ENCODE measurements at regions of chr14 and their contacts with region 1.

Region 1: GRCh38 chr14:66403183-66403582 is 83.0 kb upstream of the CCDC196 start:
- DNase-seq: no peak
- H3K4me3 ChIP-seq: no peak overlapping the region
- H3K27ac ChIP-seq: no peak overlapping the region
- H3K4me1 ChIP-seq: no peaks in the 10 kb centered on the region; a peak in 1 of 7 replicates
- H3K27me3 ChIP-seq: no peaks in the 10 kb centered on the region
- CTCF ChIP-seq: peak in 2 of 3 experiments; percentile 25 to 42; a peak in 2 of 4 replicates
- EP300 ChIP-seq: no peak
- POLR2A ChIP-seq: no peak
- RAD21 ChIP-seq: peak; percentile 36 to 59

Region 2: DNA sequence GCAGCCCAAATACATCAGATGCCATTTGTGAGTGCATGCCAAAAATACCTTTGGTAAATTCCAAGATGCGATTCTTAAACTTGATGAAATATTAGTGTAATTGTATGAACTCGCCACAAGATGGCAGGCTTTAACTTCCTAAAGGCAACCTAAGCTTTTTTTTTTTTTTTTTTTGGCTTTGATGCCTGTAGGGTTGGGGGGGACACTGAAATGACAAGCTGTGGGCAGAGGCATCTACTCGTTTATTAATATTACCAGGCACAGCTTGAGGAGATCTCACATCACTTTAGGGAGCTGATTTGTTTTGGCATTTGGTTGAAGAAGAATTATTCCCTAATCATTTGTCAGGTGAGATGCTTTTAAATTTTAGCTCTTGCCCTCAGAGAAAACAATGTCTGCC is 43.7 kb before region 1 on chr14:
- CTCF ChIA-PET with region 1: interaction called, 35 read pairs
- POLR2A ChIA-PET with region 1: no interaction called
- DNase-seq: no peak
- H3K4me3 ChIP-seq: no peak overlapping the region
- H3K27ac ChIP-seq: no peak overlapping the region
- H3K4me1 ChIP-seq: peaks cover 0 to 6% (median 0%) of the 10 kb centered on the region in 4 experiments; a peak in 3 of 7 replicates
- H3K27me3 ChIP-seq: no peaks in the 10 kb centered on the region
- CTCF ChIP-seq: peak in 2 of 3 experiments; percentile 52 to 53; a peak in 2 of 4 replicates
- EP300 ChIP-seq: no peak
- POLR2A ChIP-seq: no peak
- RAD21 ChIP-seq: peak; percentile 86

Region 3: GRCh38 chr14:66380143-66380542 is 23.0 kb before region 1 on chr14:
- CTCF ChIA-PET with region 1: interaction called, 12 read pairs
- POLR2A ChIA-PET with region 1: no interaction called
- DNase-seq: no peak
- H3K4me3 ChIP-seq: no peak overlapping the region
- H3K27ac ChIP-seq: no peak overlapping the region
- H3K4me1 ChIP-seq: peaks cover 0 to 5% (median 4%) of the 10 kb centered on the region in 4 experiments; a peak in 4 of 7 replicates
- H3K27me3 ChIP-seq: no peaks in the 10 kb centered on the region
- CTCF ChIP-seq: no peak
- EP300 ChIP-seq: no peak
- POLR2A ChIP-seq: no peak
- RAD21 ChIP-seq: no peak

Region 4: DNA sequence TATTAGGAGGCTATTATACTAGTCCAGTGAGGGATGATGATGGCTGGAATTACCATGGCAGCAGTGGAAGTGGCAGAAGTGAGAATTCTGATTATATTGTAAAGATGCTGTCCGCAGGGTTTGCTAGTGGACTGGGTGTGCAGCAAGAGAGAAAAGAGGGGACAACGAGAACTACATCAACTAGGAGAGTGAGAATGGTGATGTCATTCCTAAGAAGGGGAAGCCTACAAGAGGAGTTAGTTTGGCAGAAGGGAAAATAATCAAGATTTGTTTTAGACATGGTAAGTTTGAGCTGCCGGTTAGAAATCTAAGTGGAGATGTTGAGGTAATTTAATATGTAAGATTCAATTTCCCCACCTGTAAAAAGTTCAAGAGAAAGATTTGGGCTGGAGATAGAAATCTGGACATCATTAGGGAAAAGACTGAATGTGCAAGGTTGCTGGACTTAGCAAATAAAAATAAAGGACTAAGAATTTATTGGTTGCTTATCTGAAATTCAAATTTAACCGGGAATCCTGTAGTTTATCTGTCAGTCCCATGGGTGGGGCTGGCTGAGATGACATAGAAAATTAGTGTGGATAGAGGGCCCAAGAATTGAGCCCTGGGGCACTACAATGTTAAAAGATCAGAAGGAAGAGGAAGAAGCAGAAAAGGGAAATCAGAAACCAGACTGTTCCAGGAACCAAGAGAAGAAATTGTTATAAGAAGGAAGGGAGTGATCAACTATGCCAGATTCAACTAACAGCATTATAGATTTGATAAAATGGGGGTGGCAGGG is 13.9 kb before region 1 on chr14:
- CTCF ChIA-PET with region 1: interaction called, 26 read pairs
- POLR2A ChIA-PET with region 1: no interaction called
- DNase-seq: no peak
- H3K4me3 ChIP-seq: no peak overlapping the region
- H3K27ac ChIP-seq: no peak overlapping the region
- H3K4me1 ChIP-seq: no peaks in the 10 kb centered on the region; a peak in 2 of 7 replicates
- H3K27me3 ChIP-seq: no peaks in the 10 kb centered on the region
- CTCF ChIP-seq: no peak
- EP300 ChIP-seq: no peak
- POLR2A ChIP-seq: no peak
- RAD21 ChIP-seq: no peak

Region 5: DNA sequence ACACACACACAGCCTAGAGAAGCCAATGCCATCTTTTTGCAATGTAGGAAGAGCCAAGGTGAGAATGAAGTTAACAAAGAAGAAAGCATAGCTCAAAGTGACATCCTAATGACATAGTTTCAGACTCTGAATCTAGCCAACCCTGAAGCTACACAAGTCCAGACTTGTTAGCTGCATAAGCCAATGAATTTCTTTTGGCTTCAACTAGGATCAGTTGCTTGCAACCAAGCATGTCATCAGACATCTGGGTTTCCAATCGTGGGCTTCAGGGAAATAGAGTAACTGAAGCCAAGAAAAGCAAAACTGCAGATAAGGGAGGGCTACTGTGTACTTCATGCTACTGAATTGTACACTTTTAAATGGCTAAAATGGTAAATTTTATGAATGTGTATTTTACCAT is 100.3 kb after region 1 on chr14:
- CTCF ChIA-PET with region 1: no interaction called
- POLR2A ChIA-PET with region 1: no interaction called
- DNase-seq: no peak
- H3K4me3 ChIP-seq: no peak overlapping the region
- H3K27ac ChIP-seq: no peak overlapping the region
- H3K4me1 ChIP-seq: peaks cover 0 to 3% (median 0%) of the 10 kb centered on the region in 4 experiments; a peak in 2 of 7 replicates
- H3K27me3 ChIP-seq: no peaks in the 10 kb centered on the region
- CTCF ChIP-seq: no peak
- EP300 ChIP-seq: no peak
- POLR2A ChIP-seq: no peak
- RAD21 ChIP-seq: no peak